Activated CD8-positive, alpha-beta memory T cell treated with anti-CD3 and anti-CD28 coated beads, Interleukin-2, amount 10 ng/mL, durations not matched to agents 7 days and 5 days (primary cell): ENCODE measurements at regions of chr22 and their contacts with region 1.

Region 1: GRCh38 chr22:41237707-41238569 is 2.8 kb downstream of the CHADL start:
- DNase-seq: peak; percentile 89
- ATAC-seq: peak; percentile 97
- H3K4me3 Mint-ChIP-seq: peak overlapping the region; percentile 59
- H3K27ac Mint-ChIP-seq: no peak overlapping the region
- H3K4me1 Mint-ChIP-seq: peaks cover 8% of the 10 kb centered on the region
- H3K27me3 Mint-ChIP-seq: peaks cover 3% of the 10 kb centered on the region

Region 2: DNA sequence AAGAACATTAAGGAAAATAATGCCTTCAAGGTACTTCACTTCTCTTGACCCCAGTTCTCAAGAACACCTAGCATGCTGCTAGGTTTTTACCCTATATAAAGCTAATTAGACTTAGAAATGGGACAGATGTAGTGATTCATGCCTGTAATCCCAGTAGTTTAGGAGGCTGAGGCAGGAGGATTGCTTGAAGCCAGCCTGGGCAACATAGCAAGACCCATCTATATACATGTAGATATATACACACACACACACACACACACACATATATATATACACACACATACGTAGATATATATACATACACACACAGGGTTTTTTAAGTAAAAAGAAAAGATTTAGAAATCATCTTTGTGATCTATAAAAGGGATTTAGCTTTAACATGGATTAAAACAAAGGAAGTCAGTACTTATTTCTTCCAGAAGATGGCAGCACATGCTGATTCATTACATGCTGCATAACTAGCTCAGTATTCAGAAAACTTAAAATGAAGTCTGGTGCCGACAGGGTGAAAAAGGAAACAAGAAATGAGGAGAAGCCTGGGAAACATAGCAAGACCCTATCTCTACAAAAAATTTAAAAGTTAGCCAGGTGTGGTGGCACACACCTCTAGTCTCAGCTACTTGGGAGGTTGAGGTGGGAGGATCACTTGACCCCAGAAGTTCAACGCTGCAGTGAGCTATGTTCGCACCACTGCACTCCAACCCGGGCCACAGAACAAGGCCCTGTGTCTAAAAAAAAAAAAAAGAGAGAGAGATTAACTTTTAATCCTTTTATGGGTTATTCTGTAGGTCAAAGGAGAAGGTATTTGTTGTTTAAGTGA is 315.2 kb before region 1 on chr22:
- CTCF ChIA-PET with region 1: interaction called, 137 read pairs
- DNase-seq: no peak
- ATAC-seq: peak; percentile 86
- H3K4me3 Mint-ChIP-seq: no peak overlapping the region
- H3K27ac Mint-ChIP-seq: peak overlapping the region; percentile 69
- H3K4me1 Mint-ChIP-seq: peaks cover 4% of the 10 kb centered on the region
- H3K27me3 Mint-ChIP-seq: no peaks in the 10 kb centered on the region

Region 3: GRCh38 chr22:40950962-40951794 is 286.8 kb before region 1 on chr22 and contains the start of gene RBX1:
- CTCF ChIA-PET with region 1: interaction called, 10 read pairs
- DNase-seq: peak; percentile 99
- ATAC-seq: peak; percentile 82
- H3K4me3 Mint-ChIP-seq: peak within 1 kb of the TSS; percentile 96
- H3K27ac Mint-ChIP-seq: peak within 1 kb of the TSS; percentile 98
- H3K4me1 Mint-ChIP-seq: peaks cover 39% of the 10 kb centered on the region
- H3K27me3 Mint-ChIP-seq: no peaks in the 10 kb centered on the region
- total RNA-seq, gene RBX1: 76.9 to 82.8 TPM

Region 4: DNA sequence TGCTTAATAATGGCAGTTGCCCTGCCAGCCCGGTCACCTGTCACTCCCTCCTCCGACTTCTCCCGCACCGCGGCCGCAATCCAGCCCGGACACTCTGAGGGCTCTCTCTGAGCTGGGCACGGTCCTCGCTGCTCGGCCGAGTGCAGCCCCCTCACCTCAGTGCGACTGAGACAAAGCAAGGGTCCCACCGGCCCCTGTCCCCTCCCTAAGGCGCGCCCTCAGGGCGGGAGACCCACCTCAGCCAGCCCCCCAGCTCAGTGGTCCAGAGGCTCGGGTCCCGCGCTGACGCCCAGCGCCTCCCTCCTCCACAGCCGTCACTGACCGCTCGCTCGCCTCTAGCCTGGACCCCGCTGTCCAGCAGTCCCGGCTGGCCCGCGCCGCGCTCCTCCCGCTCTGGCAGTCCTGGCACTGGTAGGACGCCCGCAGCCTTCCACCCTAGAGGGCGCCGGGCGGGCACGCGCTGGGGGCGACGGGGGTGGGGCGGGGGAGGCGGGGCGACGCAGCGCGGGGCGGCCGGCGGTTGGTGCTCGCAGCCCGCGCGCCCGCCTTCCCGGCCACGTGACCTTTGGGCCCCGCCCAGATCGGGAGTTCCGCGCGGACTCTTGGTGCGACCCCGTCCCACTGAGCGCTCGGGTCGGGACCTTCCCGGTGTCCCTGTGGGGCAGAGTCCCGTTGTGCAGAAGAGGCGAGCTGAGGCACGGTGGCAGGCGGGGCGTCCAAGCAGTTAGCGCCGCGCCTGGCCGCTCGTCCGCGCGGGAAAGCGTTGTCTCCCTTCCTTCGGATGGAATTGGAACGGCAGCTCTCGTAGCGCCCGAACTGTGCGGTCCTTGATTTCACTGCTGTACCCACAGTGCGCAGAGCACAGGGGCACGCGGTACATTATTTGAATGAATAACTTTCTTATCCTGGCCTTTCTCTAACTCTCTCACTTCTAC is 40.6 kb before region 1 on chr22:
- CTCF ChIA-PET with region 1: interaction called, 25 read pairs
- DNase-seq: peak; percentile 84
- ATAC-seq: peak; percentile 89
- H3K4me3 Mint-ChIP-seq: peak overlapping the region; percentile 82
- H3K27ac Mint-ChIP-seq: peak overlapping the region; percentile 39
- H3K4me1 Mint-ChIP-seq: peaks cover 13% of the 10 kb centered on the region
- H3K27me3 Mint-ChIP-seq: peaks cover 25% of the 10 kb centered on the region

Region 5: DNA sequence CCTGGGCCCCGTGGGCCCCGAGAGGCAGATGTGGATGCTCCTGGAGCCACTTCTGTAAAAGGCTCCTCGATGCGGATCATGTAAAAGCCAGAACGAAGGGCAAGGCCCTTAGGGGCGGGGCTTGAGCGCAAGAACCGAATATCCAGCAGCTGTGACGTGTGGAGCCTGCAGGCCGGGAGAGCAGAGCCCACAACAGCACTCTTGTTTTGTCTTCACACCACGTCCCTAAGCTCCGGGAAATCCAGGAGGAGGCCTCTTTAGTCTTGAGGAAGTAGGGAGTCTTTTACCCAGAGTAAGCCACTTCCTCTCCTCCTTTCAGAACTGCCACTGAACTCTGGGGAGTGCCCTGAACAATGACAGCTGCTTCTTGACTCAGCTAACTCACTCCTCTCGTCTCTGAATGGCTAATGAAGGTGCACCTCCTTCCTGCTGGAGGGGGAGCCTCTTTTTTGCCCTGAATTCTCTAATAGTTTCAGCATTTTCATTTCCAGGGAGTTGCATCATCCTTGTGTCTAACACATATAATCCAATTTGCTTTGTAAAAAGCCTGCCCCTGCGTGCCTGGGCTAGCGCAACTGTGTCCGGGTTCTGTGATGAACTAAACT is 20.3 kb before region 1 on chr22:
- CTCF ChIA-PET with region 1: interaction called, 22 read pairs
- DNase-seq: peak; percentile 70
- ATAC-seq: peak; percentile 93
- H3K4me3 Mint-ChIP-seq: peak overlapping the region; percentile 52
- H3K27ac Mint-ChIP-seq: peak overlapping the region; percentile 83
- H3K4me1 Mint-ChIP-seq: peaks cover 30% of the 10 kb centered on the region
- H3K27me3 Mint-ChIP-seq: no peaks in the 10 kb centered on the region

Region 6: GRCh38 chr22:41264408-41264941 is 26.5 kb after region 1 on chr22:
- CTCF ChIA-PET with region 1: interaction called, 14 read pairs
- DNase-seq: no peak
- ATAC-seq: no peak
- H3K4me3 Mint-ChIP-seq: no peak overlapping the region
- H3K27ac Mint-ChIP-seq: no peak overlapping the region
- H3K4me1 Mint-ChIP-seq: no peaks in the 10 kb centered on the region
- H3K27me3 Mint-ChIP-seq: no peaks in the 10 kb centered on the region